ENCODE measurements at regions of chr17 and their contacts with region 1.

Region 1: DNA sequence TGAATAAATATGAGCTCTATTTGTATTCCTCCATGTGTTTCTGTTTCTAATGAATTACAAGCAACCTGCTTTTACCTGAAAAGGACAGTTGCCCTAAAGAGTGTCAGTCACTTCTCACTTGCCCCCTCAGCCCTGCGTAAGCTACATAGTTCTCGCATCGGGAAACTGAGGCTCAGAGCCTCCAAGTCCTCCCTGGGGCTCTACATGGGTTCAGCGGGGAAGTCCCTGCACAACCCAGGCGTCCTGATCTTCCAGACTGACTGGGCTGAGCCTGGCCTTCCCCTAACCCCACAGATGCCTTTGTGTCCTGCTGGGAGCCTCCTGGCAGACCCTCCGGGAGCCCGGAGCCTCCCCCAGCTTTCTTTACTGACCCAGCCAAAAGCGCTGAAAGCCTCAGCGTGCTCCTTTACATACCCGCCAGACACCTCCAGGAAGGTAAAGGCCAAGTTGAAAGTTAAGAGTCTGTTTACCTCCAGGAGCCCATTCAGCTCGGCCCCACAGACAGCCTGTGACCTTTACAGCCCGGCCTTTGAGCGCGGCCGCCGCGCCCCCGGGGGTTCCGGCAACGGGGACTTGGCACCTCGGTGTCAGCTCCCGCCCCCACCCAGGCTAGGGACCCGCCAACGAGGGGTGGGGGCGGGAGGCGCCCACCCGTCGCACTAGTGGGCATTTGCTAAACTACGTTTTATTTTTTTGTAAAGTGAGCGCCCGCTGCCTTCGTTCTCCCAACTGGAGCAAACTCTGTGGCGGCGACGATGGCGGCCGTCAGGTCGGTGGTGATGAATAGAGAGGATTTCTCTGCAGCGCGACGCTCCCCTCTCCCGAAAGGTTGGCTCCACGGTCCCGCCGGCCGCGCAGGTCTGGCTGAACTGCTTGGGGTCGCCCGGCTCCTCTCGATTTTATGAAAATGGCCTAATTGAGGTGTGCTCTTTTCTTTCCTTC is 4.4 kb upstream of the HOXB13 start:
- DNase-seq: no peak
- H3K4me3 Mint-ChIP-seq: peak overlapping the region; percentile 39
- H3K27ac Mint-ChIP-seq: no peak overlapping the region
- H3K4me1 Mint-ChIP-seq: peaks cover 26% of the 10 kb centered on the region
- H3K27me3 Mint-ChIP-seq: peaks cover 82% of the 10 kb centered on the region

Region 2: GRCh38 chr17:48701864-48702532 is 31.0 kb before region 1 on chr17:
- CTCF ChIA-PET with region 1: no interaction called
- intact Hi-C with region 1: no loop called
- DNase-seq: no peak
- H3K4me3 Mint-ChIP-seq: no peak overlapping the region
- H3K27ac Mint-ChIP-seq: no peak overlapping the region
- H3K4me1 Mint-ChIP-seq: no peaks in the 10 kb centered on the region
- H3K27me3 Mint-ChIP-seq: peaks cover 44% of the 10 kb centered on the region

Region 3: DNA sequence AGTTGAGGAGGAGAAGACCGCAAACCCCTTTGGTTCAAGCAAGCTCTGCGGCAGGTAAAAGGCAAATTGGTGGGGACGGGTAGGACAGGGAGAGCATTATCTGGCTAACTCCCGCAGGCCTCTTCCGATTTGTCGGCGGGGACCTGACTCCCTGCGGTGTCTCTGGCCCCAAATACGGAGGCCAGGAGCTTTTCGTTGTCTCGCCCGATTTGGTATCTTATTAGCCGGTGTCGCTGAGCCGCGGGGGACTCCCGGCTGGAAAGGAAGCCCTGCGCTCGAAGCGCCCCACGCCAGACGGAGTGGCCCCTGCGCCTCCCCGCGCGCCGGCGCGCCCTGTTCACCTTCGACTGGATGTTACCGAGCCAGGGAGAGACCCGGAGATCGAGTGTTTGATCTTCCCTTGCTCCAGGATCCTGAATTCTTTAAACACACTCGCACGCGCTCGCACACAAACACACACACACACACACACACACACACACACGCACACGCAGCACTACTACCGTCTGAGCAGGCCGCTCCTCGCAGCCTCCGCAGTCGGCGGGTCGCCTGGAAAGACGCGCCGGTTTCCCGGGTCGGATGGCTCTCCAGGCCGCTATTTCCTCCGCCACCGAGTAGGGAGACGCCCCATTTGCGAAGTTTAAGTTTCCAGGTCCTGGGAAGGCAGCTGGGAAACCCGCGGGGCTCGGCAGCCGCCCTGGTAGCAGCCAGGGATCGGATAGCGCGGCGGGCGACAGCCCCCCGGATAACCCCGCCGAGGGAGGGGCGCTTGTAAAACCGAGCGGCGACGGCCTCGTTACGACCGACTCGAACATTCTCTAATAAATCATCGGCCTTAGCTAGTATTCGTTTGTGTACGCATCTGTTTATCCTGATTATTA is 14.0 kb before region 1 on chr17:
- CTCF ChIA-PET with region 1: interaction called, 19 read pairs
- intact Hi-C with region 1: loop called (anchors 2 kb)
- DNase-seq: no peak
- H3K4me3 Mint-ChIP-seq: peak overlapping the region; percentile 47
- H3K27ac Mint-ChIP-seq: no peak overlapping the region
- H3K4me1 Mint-ChIP-seq: peaks cover 27% of the 10 kb centered on the region
- H3K27me3 Mint-ChIP-seq: peaks cover 70% of the 10 kb centered on the region

Region 4: GRCh38 chr17:48747445-48748363 is 14.7 kb after region 1 on chr17:
- CTCF ChIA-PET with region 1: interaction called, 5 read pairs
- intact Hi-C with region 1: loop called (anchors 2 kb)
- DNase-seq: no peak
- H3K4me3 Mint-ChIP-seq: no peak overlapping the region
- H3K27ac Mint-ChIP-seq: no peak overlapping the region
- H3K4me1 Mint-ChIP-seq: peaks cover 9% of the 10 kb centered on the region
- H3K27me3 Mint-ChIP-seq: peaks cover 84% of the 10 kb centered on the region

Measured in activated naive CD4-positive, alpha-beta T cell treated with anti-CD3 and anti-CD28 coated beads for 36 hours (primary cell).